Activated CD4-positive, alpha-beta memory T cell treated with anti-CD3 and anti-CD28 coated beads for 36 hours (primary cell): ENCODE measurements at regions of chr6 and their contacts with region 1.

Region 1: DNA sequence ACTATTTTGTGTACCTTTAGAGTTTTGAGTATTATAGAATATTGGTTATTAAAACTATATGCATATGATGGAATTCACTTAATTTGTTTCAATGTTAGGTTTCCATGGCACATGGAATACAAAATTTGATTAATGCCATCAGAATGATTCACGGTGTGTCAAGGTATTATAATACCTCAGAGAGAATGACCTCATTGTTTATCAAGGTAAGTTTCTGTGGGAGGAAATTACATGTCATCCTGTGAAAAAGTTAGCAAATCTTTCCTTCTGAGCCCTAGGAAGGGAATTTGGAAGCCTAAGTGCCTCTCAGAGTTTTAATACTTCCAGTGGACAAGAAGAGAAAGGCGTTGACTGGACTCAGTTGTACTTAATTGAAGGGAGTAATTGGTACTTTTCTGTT is 40.8 kb downstream of the DNAH8 start:
- DNase-seq: no peak
- H3K4me3 Mint-ChIP-seq: no peak overlapping the region
- H3K27ac Mint-ChIP-seq: no peak overlapping the region
- H3K4me1 Mint-ChIP-seq: peaks cover 21% of the 10 kb centered on the region
- H3K27me3 Mint-ChIP-seq: peaks cover 5% of the 10 kb centered on the region

Region 2: DNA sequence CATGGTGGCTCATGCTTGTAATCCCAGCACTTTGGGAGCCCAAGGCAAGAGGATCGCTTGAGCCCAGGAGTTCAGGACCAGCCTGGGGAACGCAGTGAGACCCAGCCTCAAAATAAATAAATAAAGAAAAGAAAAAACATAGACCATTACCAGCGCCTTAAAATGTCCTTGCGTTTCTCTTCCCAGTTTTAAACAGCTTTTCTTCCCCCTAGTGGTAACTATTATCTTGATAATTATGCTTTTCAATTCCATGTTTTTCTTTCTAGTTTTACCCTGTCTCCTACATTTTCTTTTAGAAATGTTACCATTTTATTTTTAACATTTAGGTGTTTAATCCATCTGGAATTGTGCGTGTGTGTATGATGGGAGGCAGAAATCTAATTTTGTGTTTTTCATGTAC is 16.3 kb before region 1 on chr6:
- CTCF ChIA-PET with region 1: no interaction called
- POLR2A ChIA-PET with region 1: no interaction called
- intact Hi-C with region 1: no loop called
- DNase-seq: no peak
- H3K4me3 Mint-ChIP-seq: no peak overlapping the region
- H3K27ac Mint-ChIP-seq: no peak overlapping the region
- H3K4me1 Mint-ChIP-seq: no peaks in the 10 kb centered on the region
- H3K27me3 Mint-ChIP-seq: peaks cover 25% of the 10 kb centered on the region

Region 3: GRCh38 chr6:38767560-38767959 is 11.7 kb after region 1 on chr6:
- CTCF ChIA-PET with region 1: interaction called, 3 read pairs
- POLR2A ChIA-PET with region 1: no interaction called
- intact Hi-C with region 1: loop called (anchors 1 kb)
- DNase-seq: no peak
- H3K4me3 Mint-ChIP-seq: no peak overlapping the region
- H3K27ac Mint-ChIP-seq: no peak overlapping the region
- H3K4me1 Mint-ChIP-seq: peaks cover 9% of the 10 kb centered on the region
- H3K27me3 Mint-ChIP-seq: peaks cover 24% of the 10 kb centered on the region